ENCODE measurements at regions of chr18 and their contacts with region 1.

Region 1: DNA sequence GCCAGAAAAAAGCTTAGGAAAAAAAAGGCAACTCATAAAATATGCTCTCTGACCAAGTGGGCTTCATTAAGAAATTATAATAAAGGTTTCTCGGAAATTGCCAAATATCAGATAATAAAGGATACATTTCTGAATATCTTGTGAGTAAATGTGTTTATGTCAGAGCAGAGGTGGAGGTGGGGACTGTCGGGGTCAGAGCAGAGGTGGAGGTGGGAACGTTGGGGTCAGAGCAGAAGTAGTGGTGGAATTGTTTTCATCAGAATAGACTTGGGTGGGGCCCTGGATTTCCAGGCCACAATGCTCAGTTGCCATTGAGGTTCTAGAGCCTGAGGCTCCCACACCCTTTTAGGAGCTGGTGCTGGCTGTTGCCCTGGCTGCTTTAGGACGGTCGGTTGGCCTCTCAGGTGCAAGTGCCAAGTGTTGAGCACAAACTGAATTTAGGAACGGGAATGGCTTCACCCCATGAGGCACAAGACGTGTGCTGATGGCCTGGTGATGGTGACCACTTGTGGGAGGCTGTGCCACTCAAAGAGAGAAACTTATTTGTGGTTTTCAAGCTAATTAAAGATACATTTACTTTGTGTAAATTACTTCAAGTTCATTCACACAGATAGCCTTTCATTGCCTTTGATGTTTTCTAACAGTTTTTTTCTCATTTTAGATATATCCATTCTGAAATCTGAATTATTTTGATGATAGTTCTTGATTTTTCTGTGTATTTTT is 131.5 kb downstream of the ATP9B start:
- DNase-seq: peak; percentile 18
- H3K4me3 ChIP-seq: no peak overlapping the region
- H3K27ac ChIP-seq: no peak overlapping the region
- H3K4me1 ChIP-seq: peaks cover 34% of the 10 kb centered on the region
- H3K27me3 ChIP-seq: no peaks in the 10 kb centered on the region
- CTCF ChIP-seq: no peak

Region 2: DNA sequence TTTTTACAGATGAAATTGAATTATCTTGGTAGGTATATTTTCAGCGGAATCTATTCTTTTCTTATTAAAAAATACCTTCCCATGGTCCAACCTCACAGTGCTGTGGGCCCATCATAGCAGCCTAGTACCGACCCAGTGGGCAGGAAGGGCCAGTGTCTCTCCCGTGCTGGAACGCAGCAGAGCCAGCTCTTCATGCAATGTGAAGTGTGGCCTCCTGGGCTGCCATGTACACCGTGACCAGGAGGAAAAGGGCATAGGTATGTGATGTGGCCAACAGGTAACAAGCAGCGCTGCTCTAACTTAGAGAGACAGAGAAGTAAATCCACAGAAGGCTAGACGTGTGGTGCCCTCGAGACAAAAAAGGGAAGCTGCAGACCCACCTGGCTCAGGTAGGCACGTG is 442.2 kb before region 1 on chr18:
- CTCF ChIA-PET with region 1: interaction called, 14 read pairs
- dilution Hi-C with region 1: no loop called
- in situ Hi-C with region 1: no loop called
- intact Hi-C with region 1: no loop called
- DNase-seq: no peak
- H3K4me3 ChIP-seq: no peak overlapping the region
- H3K27ac ChIP-seq: no peak overlapping the region
- H3K4me1 ChIP-seq: no peaks in the 10 kb centered on the region
- H3K27me3 ChIP-seq: no peaks in the 10 kb centered on the region
- CTCF ChIP-seq: no peak

Region 3: GRCh38 chr18:79068937-79069791 is 131.5 kb before region 1 on chr18 and contains the start of gene ATP9B:
- CTCF ChIA-PET with region 1: no interaction called
- dilution Hi-C with region 1: no loop called
- in situ Hi-C with region 1: no loop called
- intact Hi-C with region 1: loop called (anchors 2 kb)
- DNase-seq: peak; percentile 98
- H3K4me3 ChIP-seq: peak within 1 kb of the TSS; percentile 57 to 92 (median 92)
- H3K27ac ChIP-seq: peak within 1 kb of the TSS; percentile 65
- H3K4me1 ChIP-seq: peaks cover 5% of the 10 kb centered on the region
- H3K27me3 ChIP-seq: no peaks in the 10 kb centered on the region
- CTCF ChIP-seq: no peak
- total RNA-seq, gene ATP9B: 17.5 to 19.8 TPM

Region 4: GRCh38 chr18:79275992-79276391 is 75.3 kb after region 1 on chr18:
- CTCF ChIA-PET with region 1: no interaction called
- dilution Hi-C with region 1: no loop called
- in situ Hi-C with region 1: no loop called
- intact Hi-C with region 1: no loop called
- DNase-seq: peak; percentile 27
- H3K4me3 ChIP-seq: no peak overlapping the region
- H3K27ac ChIP-seq: no peak overlapping the region
- H3K4me1 ChIP-seq: peaks cover 3% of the 10 kb centered on the region
- H3K27me3 ChIP-seq: no peaks in the 10 kb centered on the region
- CTCF ChIP-seq: no peak